Activated naive CD4-positive, alpha-beta T cell treated with anti-CD3 and anti-CD28 coated beads for 36 hours (primary cell): ENCODE measurements at regions of chr10 and their contacts with region 1.

Region 1: GRCh38 chr10:80662577-80663261 is 125.0 kb downstream of the SH2D4B start:
- DNase-seq: peak; percentile 83
- H3K4me3 Mint-ChIP-seq: peak overlapping the region; percentile 52
- H3K27ac Mint-ChIP-seq: no peak overlapping the region
- H3K4me1 Mint-ChIP-seq: peaks cover 4% of the 10 kb centered on the region
- H3K27me3 Mint-ChIP-seq: peaks cover 9% of the 10 kb centered on the region

Region 2: DNA sequence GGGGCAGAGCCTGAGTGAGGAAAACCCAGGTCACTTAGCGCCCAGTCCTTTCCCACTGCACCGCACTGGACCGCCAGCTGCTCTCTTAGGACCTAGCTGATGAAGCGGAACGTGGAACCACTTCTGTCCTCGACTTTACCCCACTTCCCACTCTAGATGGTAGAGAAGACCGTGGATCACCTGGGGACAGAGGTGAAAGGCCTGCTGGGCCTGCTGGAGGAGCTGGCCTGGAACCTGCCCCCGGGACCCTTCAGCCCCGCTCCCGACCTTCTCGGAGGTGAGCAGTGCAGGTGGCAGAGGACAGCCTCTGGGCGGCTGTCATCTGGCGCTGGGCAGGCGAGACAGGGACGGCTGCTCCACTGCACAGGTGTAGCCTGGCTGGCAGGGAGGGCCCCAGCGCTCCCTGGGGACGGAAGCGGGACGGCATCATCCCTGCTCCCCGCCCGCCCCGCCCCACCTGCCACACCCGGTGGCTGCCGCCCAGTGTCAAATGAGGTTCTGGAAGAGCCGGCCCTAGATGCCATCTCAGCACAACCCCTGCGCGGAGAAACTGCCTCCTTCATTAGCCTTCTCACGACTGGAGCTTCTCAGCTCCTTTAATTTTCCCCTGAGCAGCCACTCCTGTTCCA is 518.5 kb before region 1 on chr10:
- CTCF ChIA-PET with region 1: no interaction called
- intact Hi-C with region 1: no loop called
- DNase-seq: peak; percentile 61
- H3K4me3 Mint-ChIP-seq: peak overlapping the region; percentile 67
- H3K27ac Mint-ChIP-seq: no peak overlapping the region
- H3K4me1 Mint-ChIP-seq: peaks cover 15% of the 10 kb centered on the region
- H3K27me3 Mint-ChIP-seq: peaks cover 5% of the 10 kb centered on the region

Region 3: GRCh38 chr10:80535671-80536365 is 126.9 kb before region 1 on chr10:
- CTCF ChIA-PET with region 1: interaction called, 3 read pairs
- intact Hi-C with region 1: loop called (anchors 2 kb)
- DNase-seq: peak; percentile 83
- H3K4me3 Mint-ChIP-seq: peak overlapping the region; percentile 89
- H3K27ac Mint-ChIP-seq: peak overlapping the region; percentile 98
- H3K4me1 Mint-ChIP-seq: peaks cover 28% of the 10 kb centered on the region
- H3K27me3 Mint-ChIP-seq: no peaks in the 10 kb centered on the region

Region 4: GRCh38 chr10:80647173-80647811 is 15.4 kb before region 1 on chr10:
- CTCF ChIA-PET with region 1: interaction called, 17 read pairs
- intact Hi-C with region 1: no loop called
- DNase-seq: no peak
- H3K4me3 Mint-ChIP-seq: no peak overlapping the region
- H3K27ac Mint-ChIP-seq: no peak overlapping the region
- H3K4me1 Mint-ChIP-seq: no peaks in the 10 kb centered on the region
- H3K27me3 Mint-ChIP-seq: no peaks in the 10 kb centered on the region

Region 5: DNA sequence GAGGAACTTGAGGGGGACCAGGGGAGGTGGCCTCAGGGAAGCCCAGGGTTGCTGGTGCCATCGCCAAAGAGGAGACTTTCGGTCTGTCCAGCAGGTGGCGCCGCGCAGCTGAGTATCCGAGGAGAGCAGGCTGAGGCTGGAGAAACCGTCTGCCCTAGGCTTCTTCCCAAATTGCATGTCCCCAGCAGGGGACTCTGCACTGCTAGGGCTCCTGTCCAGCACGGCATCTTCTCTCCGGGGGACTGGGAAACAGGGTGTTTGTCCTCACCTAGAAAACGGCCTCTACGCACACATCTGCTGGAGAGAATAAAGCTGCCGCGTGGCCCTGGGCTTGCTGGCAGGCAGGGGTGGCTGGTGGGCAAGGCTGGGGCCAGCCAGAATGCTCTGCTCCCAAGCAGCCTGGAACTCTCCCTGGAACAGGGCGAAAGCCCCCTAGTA is 36.9 kb after region 1 on chr10:
- CTCF ChIA-PET with region 1: interaction called, 20 read pairs
- intact Hi-C with region 1: loop called (anchors 5 kb)
- DNase-seq: peak; percentile 87
- H3K4me3 Mint-ChIP-seq: no peak overlapping the region
- H3K27ac Mint-ChIP-seq: no peak overlapping the region
- H3K4me1 Mint-ChIP-seq: no peaks in the 10 kb centered on the region
- H3K27me3 Mint-ChIP-seq: no peaks in the 10 kb centered on the region

Region 6: GRCh38 chr10:80739963-80740715 is 77.4 kb after region 1 on chr10:
- CTCF ChIA-PET with region 1: no interaction called
- intact Hi-C with region 1: no loop called
- DNase-seq: no peak
- H3K4me3 Mint-ChIP-seq: no peak overlapping the region
- H3K27ac Mint-ChIP-seq: no peak overlapping the region
- H3K4me1 Mint-ChIP-seq: no peaks in the 10 kb centered on the region
- H3K27me3 Mint-ChIP-seq: peaks cover 8% of the 10 kb centered on the region

Region 7: GRCh38 chr10:80924063-80924952 is 261.6 kb after region 1 on chr10:
- CTCF ChIA-PET with region 1: interaction called, 17 read pairs
- intact Hi-C with region 1: loop called (anchors 1 kb)
- DNase-seq: peak; percentile 42
- H3K4me3 Mint-ChIP-seq: no peak overlapping the region
- H3K27ac Mint-ChIP-seq: no peak overlapping the region
- H3K4me1 Mint-ChIP-seq: no peaks in the 10 kb centered on the region
- H3K27me3 Mint-ChIP-seq: peaks cover 12% of the 10 kb centered on the region

Region 8: DNA sequence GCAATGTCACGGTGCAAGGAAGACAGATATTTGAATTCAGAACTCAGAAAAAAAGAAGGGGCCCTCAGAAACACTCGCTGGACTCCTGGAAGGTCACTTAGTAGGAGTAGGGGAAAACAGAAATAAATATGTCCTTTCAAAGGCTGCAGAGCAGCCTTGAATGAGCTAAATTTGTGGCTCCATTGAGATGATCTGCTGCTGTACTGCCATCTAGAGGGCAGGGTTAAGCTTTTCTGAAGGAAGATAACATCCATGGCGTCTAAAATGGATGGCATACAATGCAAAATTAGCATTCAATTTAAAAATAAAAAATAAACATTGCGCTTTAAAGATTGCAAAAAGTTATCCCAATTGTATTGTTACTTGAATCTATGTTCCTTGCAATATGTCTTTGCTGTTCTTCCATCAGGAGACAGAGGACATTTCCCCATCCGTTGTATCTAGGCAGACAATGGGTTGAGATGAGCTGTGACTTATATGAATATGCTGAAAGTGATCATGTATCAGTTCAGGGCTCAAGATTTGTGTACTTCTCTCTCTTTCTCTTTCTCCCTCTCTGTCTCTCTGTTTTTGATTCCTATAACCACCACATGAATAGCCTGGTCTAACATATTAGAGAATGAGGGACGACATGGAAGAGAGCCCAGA is 517.2 kb after region 1 on chr10:
- CTCF ChIA-PET with region 1: interaction called, 5 read pairs
- intact Hi-C with region 1: loop called (anchors 2 kb)
- DNase-seq: peak; percentile 13
- H3K4me3 Mint-ChIP-seq: no peak overlapping the region
- H3K27ac Mint-ChIP-seq: no peak overlapping the region
- H3K4me1 Mint-ChIP-seq: no peaks in the 10 kb centered on the region
- H3K27me3 Mint-ChIP-seq: peaks cover 3% of the 10 kb centered on the region